Activated T-helper 2 cell treated with anti-CD3 and anti-CD28 coated beads, Interferon-gamma antibody, Interleukin-2, Interleukin-4, amounts not matched to agents 10 μg/mL and 5 μg/mL and 100 μg/mL, durations not matched to agents 14 hours and 24 hours and 36 hours (primary cell): ENCODE measurements at regions of chr1 and their contacts with region 1.

Region 1: GRCh38 chr1:46603858-46604549 is at the start of gene MKNK1:
- DNase-seq: peak; percentile 97
- H3K4me3 Mint-ChIP-seq: peak within 1 kb of the TSS; percentile 87
- H3K27ac Mint-ChIP-seq: peak within 1 kb of the TSS; percentile 75
- H3K4me1 Mint-ChIP-seq: peaks cover 54% of the 10 kb centered on the region
- H3K27me3 Mint-ChIP-seq: no peaks in the 10 kb centered on the region
- total RNA-seq, gene MKNK1: 45.2 and 48.1 TPM in 2 replicates

Region 2: GRCh38 chr1:46490656-46491442 is 113.2 kb before region 1 on chr1:
- intact Hi-C with region 1: no loop called
- DNase-seq: no peak
- H3K4me3 Mint-ChIP-seq: no peak overlapping the region
- H3K27ac Mint-ChIP-seq: no peak overlapping the region
- H3K4me1 Mint-ChIP-seq: peaks cover 17% of the 10 kb centered on the region
- H3K27me3 Mint-ChIP-seq: peaks cover 94% of the 10 kb centered on the region

Region 3: DNA sequence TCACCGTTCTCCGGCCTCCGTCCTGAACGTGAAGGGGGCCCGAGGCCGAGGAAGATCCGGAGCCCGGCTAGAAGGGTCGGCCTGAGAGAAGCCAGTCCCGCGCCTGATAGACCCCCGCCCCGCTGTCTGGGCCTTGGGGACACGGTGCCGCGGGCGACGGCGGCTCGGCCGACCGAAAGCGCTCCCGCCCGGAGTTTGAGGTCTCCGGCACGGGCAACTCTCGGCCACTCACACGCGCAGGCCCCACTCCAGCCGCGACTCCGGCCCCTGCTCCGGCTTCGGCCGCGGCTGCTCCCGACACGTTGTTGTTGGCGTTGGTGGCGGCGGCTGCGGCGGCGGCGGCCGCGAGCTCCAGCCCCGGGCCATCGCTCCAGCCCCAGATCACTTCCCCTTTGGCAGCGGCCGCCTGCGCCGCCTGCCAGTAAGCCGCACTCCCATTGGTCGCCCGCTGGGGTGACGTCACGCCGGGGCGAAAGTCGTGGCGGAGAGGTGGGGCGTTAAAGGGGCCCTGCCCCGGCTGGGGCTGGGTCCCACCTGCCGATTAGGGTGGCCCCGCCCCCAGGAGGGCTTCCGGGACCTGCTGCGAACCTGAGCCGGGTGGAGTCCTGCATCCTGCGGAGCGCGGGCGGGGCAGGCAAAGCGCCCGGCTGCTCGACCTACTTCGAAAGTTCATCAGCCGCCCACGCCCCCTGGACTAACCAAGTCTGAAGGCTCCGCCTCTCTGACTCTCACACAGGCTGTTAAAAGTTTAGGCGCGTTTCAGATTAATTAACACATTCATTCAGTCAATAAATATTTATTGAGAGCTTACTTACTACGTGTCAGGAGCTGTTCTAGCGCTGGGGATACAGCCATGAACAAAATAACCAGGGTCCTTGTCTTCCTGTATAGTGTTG is 115.0 kb after region 1 on chr1 and contains the start of gene EFCAB14:
- intact Hi-C with region 1: loop called (anchors 1 kb)
- DNase-seq: peak; percentile 98
- H3K4me3 Mint-ChIP-seq: peak within 1 kb of the TSS; percentile 95
- H3K27ac Mint-ChIP-seq: peak within 1 kb of the TSS; percentile 92
- H3K4me1 Mint-ChIP-seq: peaks cover 36% of the 10 kb centered on the region
- H3K27me3 Mint-ChIP-seq: no peaks in the 10 kb centered on the region
- total RNA-seq, gene EFCAB14: 69.1 and 71.3 TPM in 2 replicates